Activated CD4-positive, alpha-beta T cell treated with anti-CD3 and anti-CD28 coated beads for 36 hours (primary cell): ENCODE measurements at regions of chr6 and their contacts with region 1.

Region 1: GRCh38 chr6:157099912-157100593 is 223.3 kb downstream of the TMEM242 start:
- DNase-seq: peak; percentile 72
- ATAC-seq: peak; percentile 98
- H3K4me3 Mint-ChIP-seq: peak overlapping the region; percentile 23
- H3K27ac Mint-ChIP-seq: peak overlapping the region; percentile 83
- H3K4me1 Mint-ChIP-seq: peaks cover 56% of the 10 kb centered on the region
- H3K27me3 Mint-ChIP-seq: no peaks in the 10 kb centered on the region

Region 2: DNA sequence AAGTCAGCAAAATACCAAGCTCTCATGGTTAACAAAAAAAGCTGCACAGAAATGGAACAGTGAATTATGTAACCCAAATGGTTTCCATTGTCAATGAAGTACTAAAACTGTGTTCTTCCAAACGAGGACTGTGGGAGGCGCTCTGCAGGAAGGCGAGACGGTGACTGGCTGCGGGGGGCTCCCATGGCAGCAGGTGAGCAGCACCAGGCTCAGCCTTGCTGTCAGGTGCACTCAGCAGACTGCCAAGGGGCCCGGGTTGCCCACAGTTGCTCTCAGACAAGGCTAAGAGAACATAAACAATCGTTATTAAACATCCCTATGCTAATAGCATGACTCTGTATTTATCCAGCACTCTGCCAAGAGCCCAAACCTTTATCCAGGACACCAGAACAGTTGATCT is 953.2 kb before region 1 on chr6:
- CTCF ChIA-PET with region 1: no interaction called
- POLR2A ChIA-PET with region 1: no interaction called
- intact Hi-C with region 1: no loop called
- DNase-seq: no peak
- ATAC-seq: no peak
- H3K4me3 Mint-ChIP-seq: no peak overlapping the region
- H3K27ac Mint-ChIP-seq: no peak overlapping the region
- H3K4me1 Mint-ChIP-seq: peaks cover 3% of the 10 kb centered on the region
- H3K27me3 Mint-ChIP-seq: no peaks in the 10 kb centered on the region

Region 3: GRCh38 chr6:156933201-156934068 is 166.6 kb before region 1 on chr6:
- CTCF ChIA-PET with region 1: no interaction called
- POLR2A ChIA-PET with region 1: no interaction called
- intact Hi-C with region 1: loop called in 1 of 2 experiments (anchors 2 kb)
- DNase-seq: no peak
- ATAC-seq: no peak
- H3K4me3 Mint-ChIP-seq: no peak overlapping the region
- H3K27ac Mint-ChIP-seq: peak overlapping the region; percentile 2
- H3K4me1 Mint-ChIP-seq: peaks cover 77% of the 10 kb centered on the region
- H3K27me3 Mint-ChIP-seq: no peaks in the 10 kb centered on the region

Region 4: GRCh38 chr6:157054531-157054979 is 45.5 kb before region 1 on chr6:
- CTCF ChIA-PET with region 1: interaction called, 3 read pairs
- POLR2A ChIA-PET with region 1: no interaction called
- intact Hi-C with region 1: loop called in 1 of 2 experiments (anchors 1 kb)
- DNase-seq: peak; percentile 49
- ATAC-seq: peak; percentile 80
- H3K4me3 Mint-ChIP-seq: peak overlapping the region; percentile 15
- H3K27ac Mint-ChIP-seq: peak overlapping the region; percentile 89
- H3K4me1 Mint-ChIP-seq: peaks cover 41% of the 10 kb centered on the region
- H3K27me3 Mint-ChIP-seq: no peaks in the 10 kb centered on the region

Region 5: DNA sequence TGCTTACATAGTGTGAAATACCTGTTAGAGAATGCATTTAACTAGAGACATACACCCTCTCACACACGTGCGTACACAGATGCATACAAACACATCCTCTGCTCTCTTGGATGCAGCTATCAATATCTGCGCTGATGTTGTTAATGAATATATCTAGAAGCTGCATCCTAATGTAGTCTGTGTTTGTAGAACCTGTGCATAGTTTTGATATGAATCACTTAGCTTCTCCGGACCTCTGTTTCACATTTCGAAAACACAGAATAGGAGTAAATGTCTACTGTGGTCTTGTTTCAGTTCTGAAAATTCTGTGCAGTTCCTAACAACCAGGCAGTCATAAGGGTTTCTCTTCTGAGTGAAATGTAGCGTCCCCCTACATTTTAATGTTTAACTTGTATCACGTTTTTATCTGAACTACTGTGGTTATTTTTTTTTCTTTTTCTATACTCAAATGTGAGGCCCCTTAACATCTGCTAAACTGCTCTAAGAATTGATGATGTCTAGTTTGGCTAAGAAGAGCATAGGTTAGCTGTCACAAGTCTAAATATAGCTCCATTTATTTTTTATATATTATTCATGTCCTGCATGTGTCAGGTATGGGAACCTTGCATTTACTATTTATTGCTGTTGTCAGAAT is 31.2 kb before region 1 on chr6:
- CTCF ChIA-PET with region 1: interaction called, 5 read pairs
- POLR2A ChIA-PET with region 1: interaction called, 3 read pairs
- intact Hi-C with region 1: loop called in 1 of 2 experiments (anchors 2 kb)
- DNase-seq: no peak
- ATAC-seq: peak; percentile 94
- H3K4me3 Mint-ChIP-seq: no peak overlapping the region
- H3K27ac Mint-ChIP-seq: peak overlapping the region; percentile 70
- H3K4me1 Mint-ChIP-seq: peaks cover 42% of the 10 kb centered on the region
- H3K27me3 Mint-ChIP-seq: no peaks in the 10 kb centered on the region

Region 6: DNA sequence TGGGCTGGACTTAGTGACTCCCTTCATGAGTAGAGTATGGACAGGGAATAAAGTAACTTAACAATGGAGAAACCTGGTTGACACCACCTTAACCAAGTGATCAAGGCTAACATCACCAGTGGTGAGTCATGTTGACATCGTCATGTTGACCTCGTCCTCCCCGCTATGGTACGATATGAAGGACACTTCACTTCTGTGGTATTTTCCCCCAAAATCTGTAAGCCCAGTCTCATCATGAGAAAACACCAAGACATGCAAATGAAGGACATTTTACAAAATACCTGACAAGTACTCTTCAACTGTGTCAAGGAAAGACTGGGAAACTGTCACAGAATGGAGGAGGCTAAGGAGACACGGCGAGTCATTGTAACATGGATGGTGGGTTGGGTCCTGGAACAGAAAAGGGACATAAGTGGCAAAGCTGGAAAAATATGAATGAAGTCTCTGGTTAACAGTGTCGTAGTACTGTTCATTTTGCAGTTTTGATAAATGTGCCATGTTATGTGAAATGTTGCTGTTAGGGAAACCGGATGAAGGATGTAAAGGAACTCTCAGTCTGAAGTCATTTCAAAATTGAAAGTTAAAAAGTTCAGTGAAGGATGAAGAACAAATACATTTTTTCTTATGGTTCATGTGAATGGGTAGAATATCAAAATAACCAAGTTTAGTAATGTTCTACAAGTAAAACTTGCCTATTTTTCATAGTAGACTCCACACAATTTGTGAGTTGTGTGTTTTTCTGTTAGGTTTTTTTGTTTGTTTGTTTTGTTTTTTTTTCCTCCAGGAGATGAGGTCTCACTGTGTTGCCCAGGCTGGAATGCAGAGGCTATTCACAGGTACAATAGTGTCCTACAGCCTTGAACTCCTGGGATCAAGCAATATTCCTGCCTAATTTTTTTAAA is 24.3 kb before region 1 on chr6:
- CTCF ChIA-PET with region 1: interaction called, 5 read pairs
- POLR2A ChIA-PET with region 1: no interaction called
- intact Hi-C with region 1: loop called in 1 of 2 experiments (anchors 1 kb)
- DNase-seq: peak; percentile 48
- ATAC-seq: peak; percentile 87
- H3K4me3 Mint-ChIP-seq: peak overlapping the region; percentile 54
- H3K27ac Mint-ChIP-seq: peak overlapping the region; percentile 89
- H3K4me1 Mint-ChIP-seq: peaks cover 53% of the 10 kb centered on the region
- H3K27me3 Mint-ChIP-seq: no peaks in the 10 kb centered on the region

Region 7: GRCh38 chr6:157083343-157083742 is 16.7 kb before region 1 on chr6:
- CTCF ChIA-PET with region 1: interaction called, 4 read pairs
- POLR2A ChIA-PET with region 1: no interaction called
- intact Hi-C with region 1: loop called in 1 of 2 experiments (anchors 2 kb)
- DNase-seq: no peak
- ATAC-seq: no peak
- H3K4me3 Mint-ChIP-seq: no peak overlapping the region
- H3K27ac Mint-ChIP-seq: no peak overlapping the region
- H3K4me1 Mint-ChIP-seq: peaks cover 32% of the 10 kb centered on the region
- H3K27me3 Mint-ChIP-seq: no peaks in the 10 kb centered on the region